ENCODE measurements at regions of chr14 and their contacts with region 1.

Region 1: GRCh38 chr14:98120831-98121464 is 1151.0 kb downstream of the BCL11B start:
- DNase-seq: no peak
- H3K4me3 ChIP-seq: no peak overlapping the region
- H3K27ac ChIP-seq: no peak overlapping the region
- H3K4me1 ChIP-seq: peaks cover 0 to 7% (median 0%) of the 10 kb centered on the region in 3 donors
- H3K27me3 ChIP-seq: no peaks in the 10 kb centered on the region
- CTCF ChIP-seq: no peak
- POLR2A ChIP-seq: no peak

Region 2: DNA sequence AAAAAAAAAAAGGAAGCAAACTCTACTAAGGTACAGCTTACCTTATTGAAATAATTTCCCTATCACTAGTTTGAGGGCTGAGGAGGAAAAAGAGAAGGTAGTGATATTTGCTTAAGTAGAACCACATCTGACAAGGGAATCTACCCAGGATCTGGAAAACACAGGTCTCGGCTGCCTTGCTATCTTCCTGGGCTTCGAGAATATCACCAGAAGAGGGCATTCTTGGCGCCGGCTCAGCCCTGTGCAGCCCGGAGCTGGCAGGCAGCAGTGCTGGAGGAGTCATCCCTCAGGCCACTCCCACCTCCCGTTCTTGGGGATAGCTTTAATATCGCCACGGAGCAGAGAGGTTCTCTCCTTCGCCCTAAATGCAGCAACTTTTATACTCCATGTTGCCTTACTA is 142.6 kb before region 1 on chr14:
- intact Hi-C with region 1: loop called (anchors 10 kb)
- DNase-seq: no peak
- H3K4me3 ChIP-seq: peak overlapping the region; percentile 19 to 59 (median 42)
- H3K27ac ChIP-seq: peak overlapping the region; percentile 74 to 89 (median 80)
- H3K4me1 ChIP-seq: peaks cover 6 to 45% (median 9%) of the 10 kb centered on the region in 3 donors
- H3K27me3 ChIP-seq: no peaks in the 10 kb centered on the region
- CTCF ChIP-seq: peak in 5 of 6 experiments; percentile 4 to 60 (median 34)
- POLR2A ChIP-seq: no peak

Region 3: DNA sequence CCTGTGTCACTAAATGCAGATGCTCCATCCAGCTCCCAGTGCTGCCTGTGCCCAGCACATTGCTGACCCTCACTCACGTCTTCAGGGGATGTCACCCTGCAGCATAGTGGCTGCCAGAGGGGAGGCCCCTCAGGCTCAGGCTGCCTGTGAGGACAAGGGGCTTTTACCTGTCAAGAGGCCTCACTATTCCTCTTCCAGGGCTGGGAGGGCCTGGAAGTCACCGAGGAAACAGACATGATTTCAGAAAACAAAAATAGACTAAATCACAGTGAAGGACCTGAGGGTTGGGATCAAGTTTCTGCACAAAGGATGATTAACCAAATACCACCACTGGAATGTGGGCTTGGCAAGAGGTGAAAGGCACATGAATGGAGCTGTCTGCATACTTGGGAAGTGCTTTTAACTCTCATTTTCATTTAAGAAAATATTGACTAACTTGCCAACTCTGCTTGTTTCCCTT is 51.2 kb before region 1 on chr14:
- intact Hi-C with region 1: no loop called
- DNase-seq: no peak
- H3K4me3 ChIP-seq: no peak overlapping the region
- H3K27ac ChIP-seq: peak overlapping the region in 1 of 4 donors; percentile 36
- H3K4me1 ChIP-seq: peaks cover 0 to 13% (median 0%) of the 10 kb centered on the region in 3 donors
- H3K27me3 ChIP-seq: no peaks in the 10 kb centered on the region
- CTCF ChIP-seq: no peak
- POLR2A ChIP-seq: no peak

Measured in esophagus squamous epithelium (tissue), 5 donors.